SK-N-SH (cell line): ENCODE measurements at regions of chr6 and their contacts with region 1.

Region 1: DNA sequence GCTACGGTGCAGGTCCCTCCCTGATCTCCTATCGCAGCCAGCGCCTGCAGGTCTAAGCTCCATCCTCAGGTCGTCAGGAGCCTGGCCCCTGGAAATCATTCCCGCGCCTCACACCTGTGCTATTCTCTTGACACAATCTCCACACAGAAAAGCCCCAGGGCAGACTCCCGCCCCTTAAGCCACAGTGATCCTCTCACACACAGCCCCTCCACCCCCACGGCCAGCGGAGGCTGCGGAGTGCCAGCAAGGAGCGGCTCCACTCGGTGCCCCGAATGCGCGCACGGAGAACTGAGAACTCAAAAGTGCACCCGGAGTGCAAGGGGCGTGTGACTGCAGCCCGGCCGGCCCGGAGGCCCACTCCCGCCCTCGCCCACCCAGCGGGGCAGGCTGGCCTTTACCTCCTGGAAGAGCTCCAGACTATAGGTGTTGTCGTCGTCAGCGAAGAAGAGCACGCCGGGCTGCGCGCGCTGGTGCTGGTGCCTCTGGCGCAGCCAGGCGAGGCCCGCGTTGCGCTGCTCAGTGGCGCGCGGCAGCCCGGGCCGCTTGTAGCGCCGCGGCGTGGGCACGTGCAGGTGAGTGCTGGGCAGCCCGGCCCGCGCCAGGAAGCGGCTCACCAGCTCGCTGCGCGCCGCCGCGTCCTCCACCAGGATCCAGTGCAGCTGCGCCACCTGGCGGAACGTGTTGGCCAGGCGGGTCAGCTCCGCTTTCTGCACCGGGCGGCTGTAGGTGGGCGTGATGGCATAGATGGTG is 1.2 kb downstream of the B3GAT2 start:
- DNase-seq: peak; percentile 91
- H3K4me3 ChIP-seq: peak overlapping the region; percentile 52 to 67
- H3K27ac ChIP-seq: no peak overlapping the region
- H3K4me1 ChIP-seq: peaks cover 0 to 14% of the 10 kb centered on the region in 2 experiments; a peak in 1 of 4 replicates
- H3K27me3 ChIP-seq: peaks cover 36% of the 10 kb centered on the region
- CTCF ChIP-seq: peak; percentile 75
- EP300 ChIP-seq: no peak
- RAD21 ChIP-seq: peak; percentile 66

Region 2: GRCh38 chr6:70520575-70520974 is 435.0 kb before region 1 on chr6:
- CTCF ChIA-PET with region 1: interaction called, 13 read pairs
- POLR2A ChIA-PET with region 1: no interaction called
- DNase-seq: peak; percentile 9
- H3K4me3 ChIP-seq: no peak overlapping the region
- H3K27ac ChIP-seq: no peak overlapping the region
- H3K4me1 ChIP-seq: no peaks in the 10 kb centered on the region
- H3K27me3 ChIP-seq: no peaks in the 10 kb centered on the region
- CTCF ChIP-seq: peak; percentile 53
- EP300 ChIP-seq: no peak
- RAD21 ChIP-seq: peak; percentile 71

Region 3: DNA sequence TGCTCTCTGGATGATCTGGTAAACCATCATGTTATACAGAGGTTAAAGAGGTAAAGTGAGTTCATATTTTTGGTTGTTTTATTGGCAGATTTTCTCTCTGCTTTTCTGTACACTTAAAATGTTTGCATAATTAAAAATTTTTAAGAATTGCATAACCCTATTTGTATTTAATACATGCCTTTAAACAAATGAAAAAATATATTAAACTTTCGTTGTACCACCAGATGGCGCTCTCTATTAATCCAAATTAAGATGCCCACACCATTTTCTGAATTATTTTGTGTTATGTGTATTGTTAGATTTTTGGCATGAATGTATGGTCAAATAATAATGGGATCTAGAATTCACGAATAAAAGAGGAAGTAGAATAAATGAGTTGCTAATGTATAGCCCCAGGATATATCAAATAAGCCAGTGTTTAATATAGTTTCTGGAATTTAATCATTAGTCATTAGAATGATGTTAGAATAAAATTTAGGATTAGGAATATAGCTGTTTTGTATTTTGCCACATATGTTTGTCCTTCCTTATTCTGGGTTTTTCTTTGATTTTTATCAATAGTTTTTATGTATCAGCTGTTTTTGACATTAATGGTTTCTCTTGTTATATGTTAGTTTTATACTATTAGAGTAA is 249.0 kb before region 1 on chr6:
- CTCF ChIA-PET with region 1: interaction called, 36 read pairs
- POLR2A ChIA-PET with region 1: no interaction called
- DNase-seq: peak; percentile 12
- H3K4me3 ChIP-seq: no peak overlapping the region
- H3K27ac ChIP-seq: no peak overlapping the region
- H3K4me1 ChIP-seq: no peaks in the 10 kb centered on the region
- H3K27me3 ChIP-seq: no peaks in the 10 kb centered on the region
- CTCF ChIP-seq: peak; percentile 87
- EP300 ChIP-seq: no peak
- RAD21 ChIP-seq: peak; percentile 80

Region 4: DNA sequence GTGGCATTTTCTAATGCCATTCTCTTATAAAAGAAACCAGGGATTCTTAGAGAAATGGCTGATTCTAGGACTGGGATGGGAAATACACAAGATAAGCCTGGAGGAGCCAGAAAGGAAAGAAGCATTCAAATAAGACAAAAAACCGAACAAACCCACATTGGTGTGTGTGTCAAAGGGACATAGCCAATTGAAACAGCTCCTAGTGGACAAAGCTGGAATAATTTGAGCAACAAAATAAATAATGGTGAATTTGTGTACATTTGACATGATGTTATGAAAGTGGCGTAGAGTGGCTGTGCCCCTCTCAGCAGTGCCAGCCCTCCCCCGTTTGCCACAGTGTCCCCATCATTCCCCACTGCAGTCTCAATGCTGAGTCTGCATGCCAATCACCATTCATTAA is 54.3 kb before region 1 on chr6:
- CTCF ChIA-PET with region 1: interaction called, 10 read pairs
- POLR2A ChIA-PET with region 1: no interaction called
- DNase-seq: no peak
- H3K4me3 ChIP-seq: no peak overlapping the region
- H3K27ac ChIP-seq: no peak overlapping the region
- H3K4me1 ChIP-seq: no peaks in the 10 kb centered on the region
- H3K27me3 ChIP-seq: no peaks in the 10 kb centered on the region
- CTCF ChIP-seq: peak; percentile 49
- EP300 ChIP-seq: no peak
- RAD21 ChIP-seq: no peak